K562 (cell line): ENCODE measurements at regions of chr1 and their contacts with region 1.

Region 1: GRCh38 chr1:198157241-198157846 is 546 bp downstream of the NEK7 start:
- DNase-seq: peak; percentile 69 to 96 (median 80)
- ATAC-seq: peak; percentile 65
- H3K4me3 ChIP-seq: peak overlapping the region; percentile 82
- H3K27ac ChIP-seq: peak overlapping the region; percentile 85
- H3K4me1 ChIP-seq: peaks cover 10 to 13% of the 10 kb centered on the region in 2 experiments; a peak in 4 of 5 replicates
- H3K27me3 ChIP-seq: no peaks in the 10 kb centered on the region
- CTCF ChIP-seq: no peak
- EP300 ChIP-seq: no peak
- POLR2A ChIP-seq: no peak; the same call in none of the 2 replicates
- RAD21 ChIP-seq: no peak

Region 2: GRCh38 chr1:197715806-197716205 is 441.5 kb before region 1 on chr1:
- CTCF ChIA-PET with region 1: no interaction called
- POLR2A ChIA-PET with region 1: no interaction called
- in situ Hi-C with region 1: no loop called
- intact Hi-C with region 1: no loop called
- DNase-seq: peak in 1 of 4 experiments; percentile 24
- ATAC-seq: peak; percentile 42; the same call in 1 of the 3 replicates
- H3K4me3 ChIP-seq: no peak overlapping the region
- H3K27ac ChIP-seq: no peak overlapping the region
- H3K4me1 ChIP-seq: no peaks in the 10 kb centered on the region
- H3K27me3 ChIP-seq: no peaks in the 10 kb centered on the region
- CTCF ChIP-seq: no peak
- EP300 ChIP-seq: no peak
- POLR2A ChIP-seq: no peak
- RAD21 ChIP-seq: no peak

Region 3: GRCh38 chr1:197937892-197938291 is 219.5 kb before region 1 on chr1:
- CTCF ChIA-PET with region 1: no interaction called
- POLR2A ChIA-PET with region 1: no interaction called
- in situ Hi-C with region 1: no loop called
- intact Hi-C with region 1: loop called (anchors 5 kb)
- DNase-seq: no peak
- ATAC-seq: no peak
- H3K4me3 ChIP-seq: no peak overlapping the region
- H3K27ac ChIP-seq: no peak overlapping the region
- H3K4me1 ChIP-seq: no peaks in the 10 kb centered on the region; a peak in 1 of 5 replicates
- H3K27me3 ChIP-seq: no peaks in the 10 kb centered on the region
- CTCF ChIP-seq: no peak
- EP300 ChIP-seq: no peak
- POLR2A ChIP-seq: no peak
- RAD21 ChIP-seq: no peak

Region 4: GRCh38 chr1:198088360-198089071 is 68.8 kb before region 1 on chr1:
- CTCF ChIA-PET with region 1: interaction called, 3 read pairs
- POLR2A ChIA-PET with region 1: no interaction called
- in situ Hi-C with region 1: no loop called
- intact Hi-C with region 1: loop called (anchors 1 kb)
- DNase-seq: peak in 2 of 4 experiments; percentile 53 to 61
- ATAC-seq: peak; percentile 85
- H3K4me3 ChIP-seq: no peak overlapping the region
- H3K27ac ChIP-seq: no peak overlapping the region; the same call in 2 of the 3 replicates
- H3K4me1 ChIP-seq: peaks cover 0 to 6% of the 10 kb centered on the region in 2 experiments; a peak in 2 of 5 replicates
- H3K27me3 ChIP-seq: no peaks in the 10 kb centered on the region
- CTCF ChIP-seq: peak; percentile 59 to 80 (median 61); a peak in 5 of 6 replicates
- EP300 ChIP-seq: no peak
- POLR2A ChIP-seq: no peak
- RAD21 ChIP-seq: peak; percentile 84 to 86

Region 5: DNA sequence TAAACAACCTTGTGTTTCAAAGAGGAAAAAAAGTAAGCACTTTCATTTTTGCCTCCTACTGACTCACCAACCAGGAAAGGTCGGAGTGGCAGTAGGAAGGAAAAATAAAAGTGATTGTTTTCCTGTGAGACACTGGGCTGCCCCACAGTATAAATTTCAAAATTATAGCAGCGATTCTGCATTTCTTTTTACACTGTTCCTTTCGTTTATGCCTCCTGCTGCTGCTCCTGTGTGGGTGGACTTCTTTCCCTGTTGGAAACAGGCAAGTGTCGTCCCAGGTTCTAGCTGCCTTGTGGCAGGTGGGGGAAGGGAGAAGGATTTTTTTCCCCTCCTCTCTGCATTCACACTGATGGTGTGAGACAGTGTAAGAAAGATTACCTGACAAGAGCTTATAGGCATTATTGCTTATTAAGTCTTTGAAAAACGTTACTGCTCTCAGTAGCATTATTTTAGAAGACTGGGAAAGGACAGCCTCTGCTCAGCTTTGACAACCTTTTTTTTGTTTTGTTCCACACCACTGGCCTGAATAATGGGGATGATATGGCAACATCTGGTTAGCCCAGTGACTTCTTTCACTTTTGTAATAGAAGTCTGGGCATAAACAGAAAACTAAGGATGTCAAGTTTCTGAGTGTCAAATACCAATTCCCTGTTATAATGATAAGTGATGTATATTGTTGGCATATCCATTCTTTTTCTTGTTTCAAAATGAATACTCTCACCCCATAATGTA is 77.3 kb after region 1 on chr1:
- CTCF ChIA-PET with region 1: no interaction called
- POLR2A ChIA-PET with region 1: no interaction called
- in situ Hi-C with region 1: no loop called
- intact Hi-C with region 1: no loop called
- DNase-seq: no peak
- ATAC-seq: peak; percentile 34; the same call in 2 of the 3 replicates
- H3K4me3 ChIP-seq: no peak overlapping the region
- H3K27ac ChIP-seq: no peak overlapping the region
- H3K4me1 ChIP-seq: no peaks in the 10 kb centered on the region
- H3K27me3 ChIP-seq: no peaks in the 10 kb centered on the region
- CTCF ChIP-seq: no peak
- EP300 ChIP-seq: no peak
- POLR2A ChIP-seq: no peak
- RAD21 ChIP-seq: no peak

Region 6: GRCh38 chr1:198275597-198275996 is 118.3 kb after region 1 on chr1:
- CTCF ChIA-PET with region 1: no interaction called
- POLR2A ChIA-PET with region 1: no interaction called
- in situ Hi-C with region 1: no loop called
- intact Hi-C with region 1: loop called (anchors 2 kb)
- DNase-seq: no peak
- ATAC-seq: no peak
- H3K4me3 ChIP-seq: no peak overlapping the region
- H3K27ac ChIP-seq: no peak overlapping the region
- H3K4me1 ChIP-seq: no peaks in the 10 kb centered on the region; a peak in 2 of 5 replicates
- H3K27me3 ChIP-seq: no peaks in the 10 kb centered on the region
- CTCF ChIP-seq: peak in 1 of 3 experiments; percentile 33; a peak in 2 of 6 replicates
- EP300 ChIP-seq: no peak
- POLR2A ChIP-seq: no peak
- RAD21 ChIP-seq: no peak

Region 7: DNA sequence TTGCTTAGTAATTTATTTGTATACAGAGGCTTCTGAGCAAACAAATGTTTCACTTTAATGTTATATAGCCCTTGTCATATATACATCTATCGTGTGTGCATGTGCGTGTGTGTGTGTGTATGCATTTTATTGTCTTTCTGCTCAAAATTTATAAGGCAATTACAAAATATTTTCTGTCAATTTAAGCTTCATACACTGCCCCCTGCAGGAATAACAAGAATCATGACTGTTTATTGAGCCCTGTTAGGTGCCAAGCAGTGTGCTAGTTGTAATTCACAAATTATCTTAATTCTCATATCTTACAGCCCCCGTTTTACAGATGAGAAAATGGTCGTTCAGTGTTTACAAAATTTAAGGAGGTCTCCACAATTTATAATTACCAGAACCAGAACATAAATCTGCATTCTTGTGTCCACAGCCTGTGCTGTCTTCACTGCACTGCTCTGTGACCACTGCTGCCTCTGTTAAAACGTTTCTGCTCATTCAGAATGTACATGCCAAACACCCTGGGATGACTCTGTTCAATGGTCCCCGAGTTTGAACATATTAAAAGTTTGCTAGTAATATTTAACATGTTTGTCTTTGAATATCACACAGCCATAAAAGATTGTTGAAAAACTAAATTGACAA is 201.8 kb after region 1 on chr1:
- CTCF ChIA-PET with region 1: no interaction called
- POLR2A ChIA-PET with region 1: no interaction called
- in situ Hi-C with region 1: no loop called
- intact Hi-C with region 1: loop called (anchors 5 kb)
- DNase-seq: peak in 1 of 4 experiments; percentile 36
- ATAC-seq: peak; percentile 75
- H3K4me3 ChIP-seq: no peak overlapping the region
- H3K27ac ChIP-seq: no peak overlapping the region
- H3K4me1 ChIP-seq: no peaks in the 10 kb centered on the region
- H3K27me3 ChIP-seq: no peaks in the 10 kb centered on the region
- CTCF ChIP-seq: peak; percentile 43 to 56 (median 47); a peak in 5 of 6 replicates
- EP300 ChIP-seq: no peak
- POLR2A ChIP-seq: no peak
- RAD21 ChIP-seq: peak; percentile 62 to 74